Activated CD4-positive, alpha-beta T cell treated with anti-CD3 and anti-CD28 coated beads, Interleukin-2, amount 10 ng/mL, durations not matched to agents 24 days and 14 days (primary cell): ENCODE measurements at regions of chr14 and their contacts with region 1.

Region 1: DNA sequence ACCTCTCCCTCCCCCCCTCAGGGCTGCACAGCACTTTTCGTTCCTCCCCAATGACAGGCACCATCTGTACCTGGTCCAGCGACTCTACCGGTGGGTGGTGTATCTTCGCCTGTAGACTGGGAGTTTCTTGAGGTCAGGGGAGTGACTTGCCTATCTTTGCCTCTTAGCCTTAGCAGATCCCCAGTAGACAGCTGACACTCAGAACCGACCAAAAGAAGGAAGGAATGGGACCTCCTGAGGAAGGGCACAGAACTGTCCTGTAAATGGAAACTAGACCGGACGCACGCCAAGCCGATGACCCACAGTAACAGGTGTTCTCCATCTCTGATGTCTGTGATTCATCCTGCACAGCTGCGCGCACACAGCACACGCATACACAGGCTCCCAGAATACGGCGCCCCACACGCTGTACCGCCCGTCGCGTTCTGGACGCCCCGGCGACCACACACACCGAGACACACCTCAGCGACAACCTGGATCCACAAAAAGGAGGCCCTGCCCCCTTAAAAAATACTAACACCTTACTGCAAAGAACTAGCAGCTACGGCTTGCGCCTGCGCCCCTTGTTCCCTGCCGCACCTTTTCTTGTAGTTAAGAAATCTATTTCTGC is 673 bp upstream of the TTC9 start:
- DNase-seq: peak; percentile 82
- H3K4me3 Mint-ChIP-seq: peak overlapping the region; percentile 94
- H3K27ac Mint-ChIP-seq: peak overlapping the region; percentile 94
- H3K4me1 Mint-ChIP-seq: peaks cover 39% of the 10 kb centered on the region
- H3K27me3 Mint-ChIP-seq: peaks cover 2% of the 10 kb centered on the region

Region 2: DNA sequence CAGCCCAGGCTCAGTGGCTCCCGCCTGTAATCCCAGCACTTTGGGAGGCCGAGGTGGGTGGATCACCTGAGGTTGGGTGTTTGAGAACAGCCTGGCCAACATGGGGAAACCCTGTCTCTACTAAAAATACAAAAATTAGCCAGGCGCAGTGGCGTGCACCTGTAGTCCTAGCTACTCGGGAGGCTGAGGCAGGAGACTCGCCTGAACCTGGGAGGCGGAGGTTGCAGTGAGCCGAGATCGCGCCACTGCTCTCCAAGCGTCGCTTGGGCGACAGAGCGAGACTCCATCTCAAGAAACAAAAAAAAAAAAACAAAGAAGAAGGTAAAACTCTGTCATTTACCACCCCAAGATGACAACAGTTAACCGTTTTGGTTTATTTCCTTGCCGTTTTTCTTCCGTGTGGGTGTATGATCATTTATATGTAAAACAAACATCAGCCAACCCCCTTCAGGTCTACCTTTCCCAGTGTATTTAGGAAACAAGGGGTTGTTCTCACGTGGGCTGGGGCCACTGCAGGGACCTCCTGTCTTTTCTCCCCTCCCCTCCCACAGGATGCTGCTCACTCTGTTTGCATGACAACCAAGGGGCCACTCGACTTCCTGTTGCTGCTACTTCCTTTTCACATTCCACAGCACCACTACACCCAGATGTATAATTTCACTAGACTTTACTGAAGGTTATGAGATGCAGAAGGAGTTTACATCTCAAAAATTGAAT is 14.2 kb after region 1 on chr14:
- intact Hi-C with region 1: loop called (anchors 1 kb)
- DNase-seq: peak; percentile 94
- H3K4me3 Mint-ChIP-seq: peak overlapping the region; percentile 85
- H3K27ac Mint-ChIP-seq: peak overlapping the region; percentile 98
- H3K4me1 Mint-ChIP-seq: peaks cover 73% of the 10 kb centered on the region
- H3K27me3 Mint-ChIP-seq: no peaks in the 10 kb centered on the region

Region 3: GRCh38 chr14:70809543-70810244 is 168.7 kb after region 1 on chr14:
- intact Hi-C with region 1: loop called (anchors 5 kb)
- DNase-seq: peak; percentile 96
- H3K4me3 Mint-ChIP-seq: no peak overlapping the region
- H3K27ac Mint-ChIP-seq: peak overlapping the region; percentile 79
- H3K4me1 Mint-ChIP-seq: peaks cover 7% of the 10 kb centered on the region
- H3K27me3 Mint-ChIP-seq: peaks cover 4% of the 10 kb centered on the region

Region 4: GRCh38 chr14:71403656-71404055 is 762.6 kb after region 1 on chr14:
- intact Hi-C with region 1: no loop called
- DNase-seq: peak; percentile 81
- H3K4me3 Mint-ChIP-seq: no peak overlapping the region
- H3K27ac Mint-ChIP-seq: peak overlapping the region; percentile 36
- H3K4me1 Mint-ChIP-seq: peaks cover 40% of the 10 kb centered on the region
- H3K27me3 Mint-ChIP-seq: no peaks in the 10 kb centered on the region